Calu3 (cell line): ENCODE measurements at regions of chr14 and their contacts with region 1.

Region 1: DNA sequence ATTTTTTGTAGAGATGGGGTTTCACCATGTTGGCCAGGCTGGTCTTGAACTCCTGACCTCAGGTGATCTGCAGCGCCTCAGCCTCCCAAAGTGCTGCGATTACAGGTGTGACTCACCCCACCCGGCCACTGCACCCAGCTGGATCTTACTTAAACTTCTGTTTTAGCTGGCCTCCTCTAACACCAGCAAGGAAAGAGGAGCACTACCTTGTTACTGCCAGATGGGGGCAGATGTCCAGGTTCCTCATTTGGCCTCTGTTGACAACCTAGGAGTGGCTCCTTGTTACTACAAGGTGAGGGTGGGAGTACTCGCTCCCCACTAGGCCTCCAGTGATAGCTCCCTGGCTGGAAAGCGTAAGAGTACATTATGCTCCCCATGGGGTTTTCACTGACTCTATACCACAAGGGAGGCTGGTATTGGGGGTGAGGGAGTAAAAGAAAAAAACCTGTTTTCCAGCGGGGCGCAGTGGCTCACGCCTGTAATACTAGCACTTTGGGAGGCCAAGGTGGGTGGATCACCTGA is 13.1 kb upstream of the ARF6 start:
- DNase-seq: peak; percentile 60
- H3K4me3 Mint-ChIP-seq: no peak overlapping the region
- H3K27ac Mint-ChIP-seq: no peak overlapping the region
- H3K4me1 Mint-ChIP-seq: peaks cover 19% of the 10 kb centered on the region
- H3K27me3 Mint-ChIP-seq: no peaks in the 10 kb centered on the region
- CTCF ChIP-seq: peak; percentile 56

Region 2: GRCh38 chr14:49867831-49868723 is 11.7 kb before region 1 on chr14:
- CTCF ChIA-PET with region 1: interaction called, 10 read pairs
- intact Hi-C with region 1: no loop called
- DNase-seq: peak; percentile 96
- H3K4me3 Mint-ChIP-seq: peak overlapping the region; percentile 82
- H3K27ac Mint-ChIP-seq: peak overlapping the region; percentile 76
- H3K4me1 Mint-ChIP-seq: peaks cover 8% of the 10 kb centered on the region
- H3K27me3 Mint-ChIP-seq: no peaks in the 10 kb centered on the region
- CTCF ChIP-seq: no peak